Common myeloid progenitor, CD34-positive (primary cell): ENCODE measurements at regions of chr6 and their contacts with region 1.

Region 1: DNA sequence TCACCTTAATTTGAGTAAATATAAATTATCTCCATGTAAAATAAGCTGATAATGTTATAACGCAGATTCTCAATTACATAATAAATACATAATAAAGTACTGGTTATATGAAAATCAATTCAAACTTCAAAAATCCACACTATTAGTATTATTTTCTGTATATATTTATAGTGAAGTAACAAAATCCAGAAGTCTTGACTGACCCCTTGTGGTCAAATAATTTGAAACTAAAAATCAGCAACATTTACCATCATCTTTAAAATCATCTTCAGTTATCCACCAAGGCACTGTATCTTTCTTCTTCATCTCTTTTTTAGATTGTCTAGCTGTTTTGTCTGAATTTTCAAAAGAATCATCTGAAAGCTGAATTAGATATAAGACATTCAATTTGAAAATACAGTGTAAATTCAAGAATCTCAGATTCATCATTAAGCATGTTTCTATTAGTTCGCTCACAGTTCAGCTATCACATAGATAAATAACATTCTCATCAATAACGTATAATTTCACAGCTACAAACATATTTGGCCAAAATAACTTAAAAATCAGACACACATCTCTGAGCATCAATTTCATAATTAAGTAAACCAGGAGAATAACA is 6.5 kb downstream of the CEP162 start:
- DNase-seq: peak; percentile 28 to 52 (median 45)
- H3K4me3 ChIP-seq: no peak overlapping the region
- H3K27ac ChIP-seq: no peak overlapping the region
- H3K4me1 ChIP-seq: no peaks in the 10 kb centered on the region
- H3K27me3 ChIP-seq: no peaks in the 10 kb centered on the region

Region 2: GRCh38 chr6:83615025-83615999 is 605.6 kb before region 1 on chr6:
- CTCF ChIA-PET with region 1: interaction called, 17 read pairs
- POLR2A ChIA-PET with region 1: no interaction called
- DNase-seq: peak; percentile 24 to 65 (median 62)
- H3K4me3 ChIP-seq: no peak overlapping the region
- H3K27ac ChIP-seq: no peak overlapping the region
- H3K4me1 ChIP-seq: no peaks in the 10 kb centered on the region
- H3K27me3 ChIP-seq: peaks cover 0 to 2% (median 0%) of the 10 kb centered on the region in 5 experiments